ENCODE measurements at regions of chr17 and their contacts with region 1.

Region 1: DNA sequence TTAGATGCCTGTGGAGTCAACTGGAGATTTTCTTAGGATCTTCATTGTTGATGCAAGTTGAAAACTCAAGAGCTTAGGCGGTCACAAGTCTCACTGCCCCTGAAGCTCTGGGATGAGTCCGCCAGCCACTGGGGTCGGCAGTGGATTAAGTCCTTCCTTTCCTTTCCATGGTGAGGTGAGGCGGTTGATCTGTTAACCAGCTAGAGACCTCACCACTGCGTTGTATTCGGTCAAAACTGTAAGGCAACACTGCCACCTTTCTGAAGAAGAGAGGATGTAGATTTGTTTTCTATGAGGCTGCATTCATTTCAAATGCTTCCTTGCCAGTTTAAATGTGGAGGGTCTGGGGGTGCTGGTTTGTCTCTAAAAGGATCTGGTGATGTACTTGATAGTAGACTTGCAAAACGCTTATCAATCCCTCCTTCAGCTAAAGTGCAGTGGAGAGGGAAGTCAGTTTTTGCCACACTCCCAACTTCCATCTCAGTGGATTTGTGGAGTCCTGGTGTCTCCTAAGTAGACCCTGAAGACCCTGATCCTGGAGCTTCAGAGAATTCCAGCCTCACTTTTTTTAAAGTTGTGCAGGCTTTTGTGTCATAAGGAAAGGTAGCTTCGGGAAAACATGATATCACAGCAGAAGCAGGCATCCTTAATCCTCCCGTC is 1.7 kb downstream of the MYOCD start:
- DNase-seq: peak; percentile 19 to 52
- H3K4me3 ChIP-seq: no peak overlapping the region
- H3K27ac ChIP-seq: no peak overlapping the region
- H3K4me1 ChIP-seq: peaks cover 0 to 7% (median 2%) of the 10 kb centered on the region in 4 experiments; a peak in 3 of 7 replicates
- H3K27me3 ChIP-seq: peaks cover 0 to 18% (median 13%) of the 10 kb centered on the region in 4 experiments; a peak in 6 of 7 replicates
- CTCF ChIP-seq: peak in 2 of 3 experiments; percentile 71 to 75; a peak in 3 of 4 replicates
- EP300 ChIP-seq: no peak
- POLR2A ChIP-seq: no peak
- RAD21 ChIP-seq: peak; percentile 93 to 97

Region 2: DNA sequence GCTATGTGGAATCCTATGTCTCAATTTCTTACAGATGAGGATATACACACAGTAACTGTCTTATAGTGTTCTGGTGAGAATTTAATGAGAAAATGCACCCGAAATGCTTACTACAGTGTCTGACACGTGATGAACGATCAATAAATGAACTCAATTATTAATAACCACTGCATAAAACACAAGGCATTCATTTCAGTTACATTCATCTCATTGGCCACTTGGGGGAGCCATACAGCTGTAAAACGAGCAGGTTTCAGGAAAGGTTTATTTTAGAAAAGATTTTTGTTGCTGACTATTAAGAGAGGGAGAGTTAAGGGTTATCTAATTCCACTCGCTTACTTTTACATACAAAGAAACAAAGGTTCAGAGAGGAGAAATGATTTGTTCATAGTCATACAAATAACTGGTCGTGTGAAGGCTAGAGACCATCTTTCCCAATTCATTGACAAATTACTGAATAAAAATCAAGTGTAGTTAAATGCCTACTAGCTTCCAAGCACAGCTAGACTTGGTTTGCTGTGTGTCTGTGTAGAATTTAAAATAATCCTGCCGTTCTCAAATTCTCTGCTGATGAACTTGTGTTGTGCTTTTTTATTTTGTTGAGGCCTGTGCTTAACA is 486.7 kb before region 1 on chr17:
- CTCF ChIA-PET with region 1: interaction called, 33 read pairs
- POLR2A ChIA-PET with region 1: no interaction called
- DNase-seq: no peak
- H3K4me3 ChIP-seq: no peak overlapping the region
- H3K27ac ChIP-seq: no peak overlapping the region
- H3K4me1 ChIP-seq: no peaks in the 10 kb centered on the region; a peak in 1 of 7 replicates
- H3K27me3 ChIP-seq: no peaks in the 10 kb centered on the region
- CTCF ChIP-seq: peak in 2 of 3 experiments; percentile 58 to 70; a peak in 2 of 4 replicates
- EP300 ChIP-seq: no peak
- POLR2A ChIP-seq: no peak
- RAD21 ChIP-seq: peak; percentile 84 to 88

Region 3: GRCh38 chr17:12256380-12256995 is 410.9 kb before region 1 on chr17:
- CTCF ChIA-PET with region 1: interaction called, 33 read pairs
- POLR2A ChIA-PET with region 1: no interaction called
- DNase-seq: no peak
- H3K4me3 ChIP-seq: no peak overlapping the region
- H3K27ac ChIP-seq: no peak overlapping the region
- H3K4me1 ChIP-seq: no peaks in the 10 kb centered on the region
- H3K27me3 ChIP-seq: peaks cover 0 to 1% (median 0%) of the 10 kb centered on the region in 4 experiments; a peak in 1 of 7 replicates
- CTCF ChIP-seq: peak in 2 of 3 experiments; percentile 57 to 73; a peak in 3 of 4 replicates
- EP300 ChIP-seq: no peak
- POLR2A ChIP-seq: no peak
- RAD21 ChIP-seq: peak; percentile 86 to 88

Region 4: GRCh38 chr17:12342609-12343435 is 324.6 kb before region 1 on chr17:
- CTCF ChIA-PET with region 1: interaction called, 27 read pairs
- POLR2A ChIA-PET with region 1: no interaction called
- DNase-seq: peak; percentile 36 to 94
- H3K4me3 ChIP-seq: no peak overlapping the region
- H3K27ac ChIP-seq: no peak overlapping the region
- H3K4me1 ChIP-seq: no peaks in the 10 kb centered on the region
- H3K27me3 ChIP-seq: no peaks in the 10 kb centered on the region
- CTCF ChIP-seq: peak; percentile 73 to 79 (median 73)
- EP300 ChIP-seq: no peak
- POLR2A ChIP-seq: no peak
- RAD21 ChIP-seq: peak; percentile 80 to 88

Region 5: DNA sequence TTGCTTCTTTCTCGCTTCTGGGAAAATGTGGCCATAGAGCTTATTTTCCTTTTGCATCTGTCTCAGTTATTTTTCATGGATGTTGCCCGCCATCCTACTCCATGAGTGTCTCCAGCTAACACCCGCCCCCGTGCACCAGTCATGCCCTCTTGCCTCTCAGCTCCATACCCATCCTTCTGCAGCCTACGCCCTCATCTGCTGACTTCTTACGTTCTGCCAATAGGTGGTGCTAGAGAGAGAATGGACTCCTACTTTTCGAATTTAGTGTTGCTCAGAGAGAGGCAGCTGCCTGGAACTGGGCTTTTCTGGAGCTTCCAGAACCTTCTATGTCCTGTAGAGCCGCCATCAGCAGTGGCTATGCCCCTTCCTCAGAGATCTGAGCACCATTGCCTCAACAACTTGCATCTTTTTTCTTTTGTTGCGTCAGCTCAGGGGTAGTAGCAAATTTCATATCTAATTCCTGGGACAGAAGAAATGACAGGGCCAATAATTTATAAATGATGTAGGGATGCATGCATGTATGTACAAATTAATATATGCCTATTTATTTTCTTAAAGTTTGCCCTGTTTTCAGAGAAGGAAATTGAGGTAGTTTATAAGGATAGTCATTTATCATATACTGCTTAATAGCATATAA is 121.4 kb before region 1 on chr17:
- CTCF ChIA-PET with region 1: interaction called, 29 read pairs
- POLR2A ChIA-PET with region 1: no interaction called
- DNase-seq: peak; percentile 27 to 61
- H3K4me3 ChIP-seq: no peak overlapping the region
- H3K27ac ChIP-seq: no peak overlapping the region
- H3K4me1 ChIP-seq: no peaks in the 10 kb centered on the region
- H3K27me3 ChIP-seq: no peaks in the 10 kb centered on the region
- CTCF ChIP-seq: peak; percentile 48 to 89 (median 66)
- EP300 ChIP-seq: no peak
- POLR2A ChIP-seq: no peak
- RAD21 ChIP-seq: peak; percentile 65 to 77

Region 6: DNA sequence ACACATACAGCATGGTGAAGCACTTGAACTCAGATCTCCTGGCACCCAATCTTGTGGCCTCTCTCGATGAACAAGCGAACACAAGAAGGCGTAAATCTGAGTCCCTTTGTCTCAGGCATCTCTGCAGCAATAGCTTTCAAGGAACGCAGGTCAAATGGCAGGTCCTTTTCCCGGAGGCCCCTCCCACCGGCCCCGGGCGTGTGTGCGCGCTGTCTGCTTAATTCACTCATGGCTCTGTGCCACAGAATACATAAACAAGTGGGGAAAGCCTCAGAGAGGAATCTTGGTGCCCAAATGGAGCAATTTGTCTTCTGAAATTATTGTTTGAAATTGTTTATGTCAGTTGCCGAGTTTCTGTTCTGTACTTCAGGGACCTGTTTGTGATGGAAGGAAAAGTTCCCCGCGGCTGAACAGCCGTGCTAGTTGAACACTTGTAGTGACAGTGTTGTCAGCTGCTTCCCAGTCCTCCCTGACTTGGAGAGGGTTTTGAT is 13.0 kb after region 1 on chr17:
- CTCF ChIA-PET with region 1: interaction called, 10 read pairs
- POLR2A ChIA-PET with region 1: no interaction called
- DNase-seq: no peak
- H3K4me3 ChIP-seq: no peak overlapping the region
- H3K27ac ChIP-seq: no peak overlapping the region
- H3K4me1 ChIP-seq: no peaks in the 10 kb centered on the region
- H3K27me3 ChIP-seq: no peaks in the 10 kb centered on the region
- CTCF ChIP-seq: no peak
- EP300 ChIP-seq: no peak
- POLR2A ChIP-seq: no peak
- RAD21 ChIP-seq: no peak

Region 7: GRCh38 chr17:12744298-12744697 is 76.9 kb after region 1 on chr17:
- CTCF ChIA-PET with region 1: interaction called, 26 read pairs
- POLR2A ChIA-PET with region 1: no interaction called
- DNase-seq: no peak
- H3K4me3 ChIP-seq: no peak overlapping the region
- H3K27ac ChIP-seq: no peak overlapping the region
- H3K4me1 ChIP-seq: peaks cover 0 to 3% (median 0%) of the 10 kb centered on the region in 4 experiments; a peak in 1 of 7 replicates
- H3K27me3 ChIP-seq: no peaks in the 10 kb centered on the region
- CTCF ChIP-seq: no peak
- EP300 ChIP-seq: no peak
- POLR2A ChIP-seq: no peak
- RAD21 ChIP-seq: no peak